ENCODE measurements at regions of chr7 and their contacts with region 1.

Region 1: DNA sequence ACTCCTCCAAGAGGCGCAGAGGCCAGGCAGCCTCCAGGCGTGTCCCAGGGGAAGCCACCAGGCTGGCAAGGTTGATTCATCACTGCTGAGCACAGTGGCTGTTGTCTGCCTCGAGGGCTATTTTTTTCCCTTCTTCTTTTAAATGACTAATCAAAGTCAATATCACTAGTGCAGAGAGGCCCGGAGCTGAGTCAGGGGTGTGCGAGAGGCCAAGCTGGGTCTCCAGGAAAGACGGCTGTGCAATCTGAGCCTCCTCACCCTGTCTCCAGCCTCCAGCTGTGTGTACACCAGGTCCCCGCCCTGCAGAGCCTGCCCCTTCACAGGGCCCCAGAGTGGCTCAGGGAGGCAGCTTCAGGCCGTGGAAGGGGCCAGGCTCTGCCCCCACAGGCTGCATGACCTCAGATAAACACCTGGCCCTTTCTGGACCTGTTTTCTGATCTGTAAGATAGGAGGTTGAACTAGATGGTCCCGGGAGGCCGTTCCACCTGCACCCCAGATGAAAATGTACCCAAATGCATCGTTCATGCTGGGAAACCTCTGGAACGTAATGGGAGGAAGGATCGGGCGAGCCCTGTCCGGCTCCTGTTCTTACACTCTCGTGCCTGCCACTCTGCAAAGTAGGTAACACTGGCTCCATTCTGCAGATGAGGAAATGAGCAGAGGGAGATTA is 3.7 kb downstream of the STX1A start:
- DNase-seq: no peak
- H3K4me3 Mint-ChIP-seq: no peak overlapping the region
- H3K27ac Mint-ChIP-seq: no peak overlapping the region
- H3K4me1 Mint-ChIP-seq: peaks cover 39% of the 10 kb centered on the region
- H3K27me3 Mint-ChIP-seq: peaks cover 77% of the 10 kb centered on the region

Region 2: DNA sequence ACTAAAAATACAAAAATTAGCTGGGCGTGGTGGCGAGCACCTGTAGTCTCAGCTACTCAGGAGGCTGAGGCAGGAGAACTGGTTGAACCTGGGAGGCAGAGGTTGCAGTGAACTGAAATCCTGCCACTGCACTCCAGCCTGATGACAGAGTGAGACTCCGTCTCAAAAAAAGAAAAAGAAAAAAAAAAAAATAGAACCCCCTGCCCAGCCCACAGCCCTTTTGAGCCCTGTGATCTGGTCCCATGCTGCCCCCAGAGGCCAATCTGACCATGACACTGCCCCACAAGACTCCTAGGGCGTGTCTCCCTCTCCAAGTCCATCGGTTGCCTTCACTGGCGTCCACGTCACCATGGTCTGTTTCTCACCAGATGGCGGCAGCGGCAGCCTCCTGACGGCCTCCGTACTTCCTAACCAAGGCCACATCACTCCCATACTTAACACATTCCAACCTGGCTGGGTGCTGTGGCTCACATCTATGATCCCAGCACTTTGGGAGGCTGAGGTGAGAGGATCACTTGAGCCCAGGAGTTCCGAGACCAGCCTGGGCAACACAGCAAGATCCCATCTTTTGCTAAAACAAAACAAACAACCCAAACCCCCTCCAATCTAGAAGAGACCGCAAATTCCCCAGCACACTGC is 14.3 kb before region 1 on chr7:
- CTCF ChIA-PET with region 1: interaction called, 10 read pairs
- DNase-seq: peak; percentile 56
- H3K4me3 Mint-ChIP-seq: no peak overlapping the region
- H3K27ac Mint-ChIP-seq: no peak overlapping the region
- H3K4me1 Mint-ChIP-seq: peaks cover 2% of the 10 kb centered on the region
- H3K27me3 Mint-ChIP-seq: peaks cover 4% of the 10 kb centered on the region

Measured in activated naive CD4-positive, alpha-beta T cell treated with anti-CD3 and anti-CD28 coated beads, Interleukin-2, amount 10 ng/mL, durations not matched to agents 7 days and 5 days (primary cell).